ENCODE measurements at regions of chr6 and their contacts with region 1.

Region 1: GRCh38 chr6:46011241-46012085 is 4.2 kb downstream of the CLIC5 start:
- DNase-seq: peak; percentile 80
- H3K4me3 Mint-ChIP-seq: peak overlapping the region; percentile 39
- H3K27ac Mint-ChIP-seq: peak overlapping the region; percentile 77
- H3K4me1 Mint-ChIP-seq: peaks cover 58% of the 10 kb centered on the region
- H3K27me3 Mint-ChIP-seq: peaks cover 1% of the 10 kb centered on the region

Region 2: DNA sequence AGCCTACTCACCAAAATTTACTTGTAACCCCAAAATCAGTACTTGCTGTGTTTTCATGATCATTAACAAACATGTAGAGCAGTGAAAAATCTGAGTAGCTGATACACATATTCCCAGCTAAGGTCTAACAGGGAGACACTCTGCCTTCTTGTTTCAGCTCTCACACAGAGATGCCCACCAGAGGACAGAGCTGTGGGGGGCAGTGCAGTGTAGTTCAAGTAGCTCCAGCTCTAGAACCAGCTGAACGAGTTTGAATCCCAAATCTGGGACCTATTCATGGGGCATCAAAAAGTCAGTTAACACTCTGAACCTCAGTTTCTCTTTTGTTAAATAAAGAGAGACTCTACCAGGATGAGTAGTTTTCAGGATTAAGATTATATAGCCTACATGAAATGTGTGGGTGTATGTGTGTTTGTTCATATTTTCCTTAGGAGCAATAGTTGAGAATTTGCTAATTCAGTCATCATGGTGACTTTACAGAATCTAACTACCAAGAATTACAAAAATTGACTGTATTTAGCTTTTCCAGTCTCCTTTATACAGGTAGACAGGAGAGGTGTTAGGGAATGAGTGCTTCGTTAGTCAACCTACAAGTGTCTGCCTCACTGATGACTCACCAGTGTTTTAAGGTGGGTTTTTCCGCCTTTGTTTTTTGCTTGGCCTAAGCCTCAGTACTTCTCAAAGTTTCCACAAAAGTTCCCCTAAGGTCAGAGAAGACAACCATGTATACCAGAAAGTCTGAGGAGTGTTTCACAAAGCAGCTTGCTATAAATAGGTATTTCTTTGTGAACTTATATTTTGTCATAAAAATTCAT is 847.3 kb before region 1 on chr6:
- CTCF ChIA-PET with region 1: no interaction called
- POLR2A ChIA-PET with region 1: no interaction called
- intact Hi-C with region 1: loop called (anchors 10 kb)
- DNase-seq: peak; percentile 60
- H3K4me3 Mint-ChIP-seq: peak overlapping the region; percentile 46
- H3K27ac Mint-ChIP-seq: peak overlapping the region; percentile 74
- H3K4me1 Mint-ChIP-seq: peaks cover 42% of the 10 kb centered on the region
- H3K27me3 Mint-ChIP-seq: no peaks in the 10 kb centered on the region

Region 3: GRCh38 chr6:45486736-45487135 is 524.7 kb before region 1 on chr6:
- CTCF ChIA-PET with region 1: no interaction called
- POLR2A ChIA-PET with region 1: no interaction called
- intact Hi-C with region 1: loop called (anchors 5 kb)
- DNase-seq: peak; percentile 45
- H3K4me3 Mint-ChIP-seq: peak overlapping the region; percentile 21
- H3K27ac Mint-ChIP-seq: peak overlapping the region; percentile 67
- H3K4me1 Mint-ChIP-seq: peaks cover 56% of the 10 kb centered on the region
- H3K27me3 Mint-ChIP-seq: no peaks in the 10 kb centered on the region

Region 4: GRCh38 chr6:45930420-45931040 is 80.9 kb before region 1 on chr6:
- CTCF ChIA-PET with region 1: interaction called, 11 read pairs
- POLR2A ChIA-PET with region 1: no interaction called
- intact Hi-C with region 1: no loop called
- DNase-seq: peak; percentile 68
- H3K4me3 Mint-ChIP-seq: no peak overlapping the region
- H3K27ac Mint-ChIP-seq: no peak overlapping the region
- H3K4me1 Mint-ChIP-seq: peaks cover 7% of the 10 kb centered on the region
- H3K27me3 Mint-ChIP-seq: no peaks in the 10 kb centered on the region

Region 5: GRCh38 chr6:45997875-45998506 is 13.5 kb before region 1 on chr6:
- CTCF ChIA-PET with region 1: no interaction called
- POLR2A ChIA-PET with region 1: no interaction called
- intact Hi-C with region 1: no loop called
- DNase-seq: no peak
- H3K4me3 Mint-ChIP-seq: no peak overlapping the region
- H3K27ac Mint-ChIP-seq: no peak overlapping the region
- H3K4me1 Mint-ChIP-seq: no peaks in the 10 kb centered on the region
- H3K27me3 Mint-ChIP-seq: no peaks in the 10 kb centered on the region

Region 6: GRCh38 chr6:46042355-46042999 is 31.0 kb after region 1 on chr6:
- CTCF ChIA-PET with region 1: interaction called, 3 read pairs
- POLR2A ChIA-PET with region 1: no interaction called
- intact Hi-C with region 1: loop called (anchors 1 kb)
- DNase-seq: peak; percentile 23
- H3K4me3 Mint-ChIP-seq: no peak overlapping the region
- H3K27ac Mint-ChIP-seq: no peak overlapping the region
- H3K4me1 Mint-ChIP-seq: peaks cover 13% of the 10 kb centered on the region
- H3K27me3 Mint-ChIP-seq: peaks cover 1% of the 10 kb centered on the region

Region 7: DNA sequence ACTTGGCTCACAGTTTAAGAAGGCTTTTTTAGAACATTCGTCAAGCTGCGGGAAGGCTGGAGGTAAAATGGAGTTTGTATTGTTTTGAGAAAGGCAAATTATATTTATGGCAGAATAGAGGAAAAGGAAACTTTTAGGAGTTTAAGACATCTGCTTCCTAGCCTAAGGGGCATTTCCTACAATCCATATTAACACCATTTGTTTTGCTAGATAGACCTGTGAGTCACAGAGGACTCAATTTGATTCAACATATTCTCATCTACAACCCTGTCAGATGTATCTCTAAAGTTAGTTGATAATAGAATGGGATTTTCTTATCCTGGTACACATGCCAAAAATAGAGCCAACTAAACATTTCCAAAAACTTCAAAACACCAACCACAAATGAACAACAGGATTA is 444.8 kb after region 1 on chr6:
- CTCF ChIA-PET with region 1: no interaction called
- POLR2A ChIA-PET with region 1: no interaction called
- intact Hi-C with region 1: no loop called
- DNase-seq: no peak
- H3K4me3 Mint-ChIP-seq: no peak overlapping the region
- H3K27ac Mint-ChIP-seq: no peak overlapping the region
- H3K4me1 Mint-ChIP-seq: no peaks in the 10 kb centered on the region
- H3K27me3 Mint-ChIP-seq: peaks cover 14% of the 10 kb centered on the region